Ovary (tissue), 10 donors: ENCODE measurements at regions of chr14 and their contacts with region 1.

Region 1: GRCh38 chr14:89027097-89027740 is 202.8 kb downstream of the TTC8 start:
- DNase-seq: peak; percentile 52 to 79 (median 68)
- H3K4me3 ChIP-seq: peak overlapping the region; percentile 32
- H3K27ac ChIP-seq: no peak overlapping the region
- H3K4me1 ChIP-seq: no peaks in the 10 kb centered on the region
- H3K27me3 ChIP-seq: no peaks in the 10 kb centered on the region
- CTCF ChIP-seq: peak; percentile 91 to 94 (median 91)
- EP300 ChIP-seq: no peak
- POLR2A ChIP-seq: no peak

Region 2: DNA sequence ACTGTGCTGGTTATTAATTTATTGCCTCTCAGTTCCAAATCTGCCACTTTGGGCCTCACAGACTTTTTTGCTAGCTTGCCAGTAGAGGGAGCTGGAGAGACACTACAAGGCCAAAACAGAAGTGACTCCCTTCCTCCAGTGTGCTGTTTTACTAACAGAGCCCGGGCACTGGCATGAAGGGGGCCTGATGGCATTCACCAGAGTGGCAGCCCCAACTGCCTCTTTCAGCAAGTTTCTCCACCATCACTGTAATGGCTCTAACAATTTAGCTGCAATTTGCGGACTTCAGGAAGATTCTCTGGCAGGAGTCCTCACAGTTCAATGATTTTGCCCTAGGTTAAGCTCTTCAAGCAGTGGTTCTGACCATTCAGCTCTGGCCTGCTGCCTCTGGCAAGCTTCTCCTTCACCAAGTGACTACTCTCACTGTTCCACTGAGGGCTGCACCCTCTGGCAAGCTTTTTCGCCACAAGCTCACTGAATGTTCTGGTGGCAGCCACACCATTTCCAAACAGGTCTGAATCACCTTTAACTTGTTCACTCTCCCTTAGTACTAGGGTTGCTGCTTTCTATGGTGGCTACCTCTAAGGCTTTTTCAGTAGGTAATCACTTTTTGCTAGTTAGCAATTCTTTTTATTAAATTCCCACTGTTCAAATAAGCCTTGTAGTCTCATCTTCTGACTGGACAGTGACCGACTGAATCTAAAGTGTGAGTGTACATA is 359.5 kb before region 1 on chr14:
- intact Hi-C with region 1: loop called in 1 of 4 experiments (anchors 10 kb)
- DNase-seq: peak; percentile 37 to 57 (median 49)
- H3K4me3 ChIP-seq: no peak overlapping the region
- H3K27ac ChIP-seq: no peak overlapping the region
- H3K4me1 ChIP-seq: no peaks in the 10 kb centered on the region
- H3K27me3 ChIP-seq: no peaks in the 10 kb centered on the region
- CTCF ChIP-seq: peak; percentile 68 to 72 (median 70)
- EP300 ChIP-seq: no peak
- POLR2A ChIP-seq: no peak

Region 3: DNA sequence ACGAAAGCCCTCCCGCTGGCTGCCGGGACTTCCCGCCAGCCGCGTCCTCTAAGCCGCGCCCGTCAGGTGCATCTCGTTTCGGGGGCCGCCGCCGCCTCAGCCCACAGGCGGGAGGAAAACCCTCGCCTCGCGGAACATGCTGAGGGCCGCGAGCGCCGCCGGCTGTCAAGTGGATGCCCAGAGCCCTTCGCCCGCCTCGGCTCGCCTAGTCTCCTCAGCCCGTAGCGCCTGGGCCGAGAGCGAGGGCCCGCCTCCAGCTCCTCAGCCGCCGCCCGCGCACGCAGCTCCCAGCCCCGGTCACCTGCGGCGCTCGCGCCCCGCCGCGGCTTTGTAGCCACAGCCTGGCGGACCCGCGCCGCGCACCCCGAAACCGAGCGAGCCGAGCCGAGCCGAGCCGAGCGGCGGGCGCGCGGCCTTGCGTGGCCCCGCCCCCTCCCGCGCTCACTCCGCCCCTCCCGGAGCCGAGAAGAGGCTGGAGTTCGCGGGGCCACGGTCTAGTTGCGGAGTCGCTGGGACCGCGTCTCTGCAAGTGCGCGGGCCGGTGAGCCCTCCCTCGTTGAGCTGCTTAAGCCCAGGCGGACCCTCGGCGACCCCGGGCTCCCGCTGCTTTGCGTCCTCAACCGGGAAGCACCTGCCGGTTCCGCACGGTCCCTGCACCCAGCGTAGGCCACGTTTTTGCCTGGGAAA is 234.5 kb before region 1 on chr14 and contains the start of gene EML5:
- intact Hi-C with region 1: loop called in 1 of 4 experiments (anchors 2 kb)
- DNase-seq: peak; percentile 90 to 96 (median 94)
- H3K4me3 ChIP-seq: peak within 1 kb of the TSS; percentile 72
- H3K27ac ChIP-seq: peak within 1 kb of the TSS; percentile 88 to 93
- H3K4me1 ChIP-seq: peaks cover 3% of the 10 kb centered on the region
- H3K27me3 ChIP-seq: no peaks in the 10 kb centered on the region
- CTCF ChIP-seq: peak in 2 of 3 donors; percentile 59 to 65
- EP300 ChIP-seq: no peak
- POLR2A ChIP-seq: peak; percentile 23
- total RNA-seq, gene EML5: 8.5 to 86.5 (median 37.0) TPM

Region 4: GRCh38 chr14:88856786-88857366 is 170.3 kb before region 1 on chr14:
- intact Hi-C with region 1: no loop called
- DNase-seq: no peak
- H3K4me3 ChIP-seq: no peak overlapping the region
- H3K27ac ChIP-seq: peak overlapping the region in 1 of 2 donors; percentile 61
- H3K4me1 ChIP-seq: peaks cover 3% of the 10 kb centered on the region
- H3K27me3 ChIP-seq: no peaks in the 10 kb centered on the region
- CTCF ChIP-seq: no peak
- EP300 ChIP-seq: no peak
- POLR2A ChIP-seq: no peak

Region 5: DNA sequence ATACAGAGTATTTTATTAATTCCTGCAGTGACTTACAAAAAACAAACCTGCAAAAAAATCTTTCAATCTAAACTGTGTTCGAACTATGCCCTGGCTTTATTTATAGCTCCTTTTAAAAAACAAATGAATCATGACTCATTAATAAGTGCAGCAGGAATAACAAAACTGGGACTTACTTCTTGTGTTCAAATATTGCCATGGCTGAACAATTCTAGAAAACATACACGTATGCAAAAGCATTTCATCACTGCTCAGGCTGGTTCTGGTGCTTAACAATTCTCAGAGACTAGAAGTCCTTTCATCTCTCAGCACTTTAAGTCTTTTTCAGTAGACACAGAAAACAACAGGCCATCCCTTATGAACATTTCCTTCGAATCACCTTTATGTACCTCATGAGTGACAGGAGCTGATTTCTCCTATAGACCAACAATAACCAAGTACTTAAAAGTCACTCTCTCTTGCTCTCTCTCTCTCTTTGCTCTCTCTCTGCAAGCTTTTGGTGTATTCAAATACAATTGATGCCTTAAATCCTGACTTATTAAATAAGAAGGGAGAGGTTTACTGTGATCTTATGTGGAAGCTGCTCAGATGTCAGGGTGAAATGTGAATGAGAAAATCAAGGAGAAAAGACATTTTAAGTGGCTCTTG is 66.0 kb after region 1 on chr14:
- intact Hi-C with region 1: no loop called
- DNase-seq: no peak
- H3K4me3 ChIP-seq: no peak overlapping the region
- H3K27ac ChIP-seq: no peak overlapping the region
- H3K4me1 ChIP-seq: no peaks in the 10 kb centered on the region
- H3K27me3 ChIP-seq: no peaks in the 10 kb centered on the region
- CTCF ChIP-seq: no peak
- EP300 ChIP-seq: no peak
- POLR2A ChIP-seq: no peak